ENCODE measurements at regions of chr3 and their contacts with region 1.

Region 1: DNA sequence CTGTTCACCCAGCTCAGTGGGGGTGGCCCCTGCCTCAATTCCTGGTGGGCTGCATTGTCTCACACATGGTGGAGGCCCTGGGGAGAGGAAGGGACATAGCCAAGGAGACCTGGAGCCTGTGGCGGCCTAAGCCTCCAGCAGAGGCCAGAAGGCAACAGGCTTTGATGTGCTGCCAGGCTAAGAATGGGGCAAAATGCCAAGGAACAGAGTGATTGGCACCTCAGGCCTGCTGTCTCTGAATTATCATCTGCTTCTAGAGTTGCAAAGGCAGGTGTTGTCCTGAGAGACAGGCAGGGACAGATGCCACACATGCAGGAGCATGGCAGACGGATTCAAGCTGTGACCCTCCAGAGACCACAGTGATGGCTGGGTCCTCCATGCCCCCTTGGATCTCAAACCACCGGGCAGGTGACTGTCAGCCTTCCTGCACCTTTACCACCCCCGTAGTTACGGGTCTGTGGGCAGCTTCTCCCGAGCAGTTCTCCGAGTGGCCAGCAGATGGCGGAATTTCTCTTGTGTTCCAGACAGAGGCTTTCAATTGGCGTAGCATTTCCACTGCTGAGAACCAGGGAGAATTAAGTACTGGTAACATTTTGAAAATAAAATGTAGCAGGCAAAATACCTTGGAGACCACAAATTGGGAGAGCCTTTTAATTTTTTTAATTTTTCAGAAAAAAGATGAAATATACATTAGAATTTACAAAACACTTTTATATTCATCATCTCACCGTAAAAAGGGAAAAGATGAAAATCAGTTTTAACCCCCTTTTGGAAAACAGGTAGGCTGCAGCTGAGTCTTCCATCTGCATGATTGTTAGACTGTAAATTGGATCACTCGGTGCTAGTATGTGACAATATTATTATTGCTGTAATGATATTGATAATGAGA is 525.5 kb upstream of the CFAP20DC start:
- DNase-seq: peak; percentile 76
- ATAC-seq: peak; percentile 61
- H3K4me3 Mint-ChIP-seq: no peak overlapping the region
- H3K27ac Mint-ChIP-seq: no peak overlapping the region
- H3K4me1 Mint-ChIP-seq: no peaks in the 10 kb centered on the region
- H3K27me3 Mint-ChIP-seq: no peaks in the 10 kb centered on the region
- CTCF ChIP-seq: peak; percentile 40

Region 2: DNA sequence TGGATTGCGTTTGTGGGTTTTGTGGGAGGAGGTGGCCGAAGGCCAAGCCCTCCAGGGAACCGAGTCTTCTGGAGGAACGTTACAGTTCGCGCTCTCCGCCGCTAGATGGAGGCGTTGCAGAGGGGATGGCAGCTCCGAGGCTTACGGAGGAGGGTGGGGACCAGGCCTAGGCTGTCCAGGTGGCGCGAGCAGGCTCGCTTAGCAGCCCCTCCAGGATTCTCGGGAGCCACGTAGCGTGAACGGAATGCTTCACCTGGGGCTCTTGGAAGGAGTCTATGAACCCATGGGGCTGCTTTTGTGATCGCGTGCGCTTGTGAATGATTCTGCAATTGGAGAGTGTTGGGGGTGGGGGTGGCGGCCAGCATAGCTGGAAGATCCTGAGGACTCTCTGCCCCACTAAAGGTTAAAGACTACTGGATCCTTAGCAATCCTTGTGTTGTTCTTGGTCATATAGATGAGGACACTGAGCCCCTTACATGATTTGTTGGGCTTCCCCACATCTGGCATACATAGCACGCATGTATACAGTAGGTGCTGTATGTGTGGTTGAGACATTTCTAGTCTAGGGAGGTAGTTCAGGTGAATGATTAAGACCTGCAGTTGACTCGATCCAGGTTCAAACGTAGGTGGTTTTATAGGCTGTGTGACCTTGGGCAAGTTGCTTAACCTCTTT is 934.5 kb before region 1 on chr3:
- CTCF ChIA-PET with region 1: no interaction called
- POLR2A ChIA-PET with region 1: no interaction called
- intact Hi-C with region 1: loop called (anchors 2 kb)
- DNase-seq: peak; percentile 50
- ATAC-seq: peak; percentile 96
- H3K4me3 Mint-ChIP-seq: no peak overlapping the region
- H3K27ac Mint-ChIP-seq: no peak overlapping the region
- H3K4me1 Mint-ChIP-seq: peaks cover 7% of the 10 kb centered on the region
- H3K27me3 Mint-ChIP-seq: peaks cover 2% of the 10 kb centered on the region
- CTCF ChIP-seq: peak; percentile 37

Region 3: DNA sequence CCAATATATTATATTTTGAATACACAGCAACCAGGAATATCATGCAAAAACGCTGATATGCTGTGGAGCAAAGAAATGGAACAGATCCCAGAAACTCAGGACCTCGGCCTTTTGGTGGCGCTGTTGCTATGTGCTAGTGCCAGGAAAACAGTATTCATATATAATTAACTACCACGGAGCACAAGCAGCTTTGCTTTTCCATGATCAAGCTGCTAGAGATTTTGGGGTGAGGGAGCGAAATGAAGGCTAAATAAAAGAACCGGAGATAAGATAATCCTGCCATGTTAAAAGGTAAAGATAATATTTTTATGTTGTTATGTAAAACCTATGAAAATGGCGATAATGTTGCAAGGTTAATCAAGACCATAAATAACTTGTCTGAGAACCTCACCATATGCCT is 751.1 kb before region 1 on chr3:
- CTCF ChIA-PET with region 1: no interaction called
- POLR2A ChIA-PET with region 1: no interaction called
- intact Hi-C with region 1: loop called (anchors 10 kb)
- DNase-seq: no peak
- ATAC-seq: no peak
- H3K4me3 Mint-ChIP-seq: no peak overlapping the region
- H3K27ac Mint-ChIP-seq: no peak overlapping the region
- H3K4me1 Mint-ChIP-seq: peaks cover 5% of the 10 kb centered on the region
- H3K27me3 Mint-ChIP-seq: no peaks in the 10 kb centered on the region
- CTCF ChIP-seq: no peak

Region 4: GRCh38 chr3:59212128-59212779 is 363.1 kb before region 1 on chr3:
- CTCF ChIA-PET with region 1: interaction called, 3 read pairs
- POLR2A ChIA-PET with region 1: no interaction called
- intact Hi-C with region 1: loop called (anchors 1 kb)
- DNase-seq: no peak
- ATAC-seq: peak; percentile 37
- H3K4me3 Mint-ChIP-seq: no peak overlapping the region
- H3K27ac Mint-ChIP-seq: no peak overlapping the region
- H3K4me1 Mint-ChIP-seq: no peaks in the 10 kb centered on the region
- H3K27me3 Mint-ChIP-seq: peaks cover 3% of the 10 kb centered on the region
- CTCF ChIP-seq: no peak

Region 5: DNA sequence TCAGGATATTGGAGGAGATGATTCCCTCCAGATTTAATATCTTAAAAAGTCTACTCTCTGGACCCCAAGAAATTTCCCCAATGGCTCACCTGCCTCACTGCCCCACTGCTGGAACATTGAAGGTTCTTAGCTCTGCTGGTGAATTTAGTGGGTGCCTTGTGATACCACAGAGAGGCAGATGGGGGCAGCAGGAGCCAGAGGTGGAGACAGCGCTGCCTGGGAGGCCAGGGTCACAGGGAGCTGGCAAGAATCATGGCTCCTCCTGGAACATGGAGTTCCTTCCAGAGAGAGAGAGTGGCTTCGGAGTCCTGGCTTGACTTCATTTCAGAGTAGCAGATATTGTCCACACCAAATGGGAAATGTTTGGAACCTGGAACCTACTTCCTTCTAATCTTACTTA is 262.0 kb before region 1 on chr3:
- CTCF ChIA-PET with region 1: interaction called, 4 read pairs
- POLR2A ChIA-PET with region 1: no interaction called
- intact Hi-C with region 1: loop called (anchors 1 kb)
- DNase-seq: no peak
- ATAC-seq: peak; percentile 40
- H3K4me3 Mint-ChIP-seq: no peak overlapping the region
- H3K27ac Mint-ChIP-seq: no peak overlapping the region
- H3K4me1 Mint-ChIP-seq: no peaks in the 10 kb centered on the region
- H3K27me3 Mint-ChIP-seq: no peaks in the 10 kb centered on the region
- CTCF ChIP-seq: no peak

Region 6: GRCh38 chr3:59809710-59810444 is 234.5 kb after region 1 on chr3:
- CTCF ChIA-PET with region 1: interaction called, 22 read pairs
- POLR2A ChIA-PET with region 1: no interaction called
- intact Hi-C with region 1: loop called (anchors 1 kb)
- DNase-seq: no peak
- ATAC-seq: no peak
- H3K4me3 Mint-ChIP-seq: no peak overlapping the region
- H3K27ac Mint-ChIP-seq: peak overlapping the region; percentile 10
- H3K4me1 Mint-ChIP-seq: peaks cover 25% of the 10 kb centered on the region
- H3K27me3 Mint-ChIP-seq: no peaks in the 10 kb centered on the region
- CTCF ChIP-seq: no peak

Region 7: GRCh38 chr3:61381745-61382392 is 1806.5 kb after region 1 on chr3:
- CTCF ChIA-PET with region 1: interaction called, 12 read pairs
- POLR2A ChIA-PET with region 1: no interaction called
- intact Hi-C with region 1: loop called (anchors 1 kb)
- DNase-seq: no peak
- ATAC-seq: peak; percentile 49
- H3K4me3 Mint-ChIP-seq: no peak overlapping the region
- H3K27ac Mint-ChIP-seq: no peak overlapping the region
- H3K4me1 Mint-ChIP-seq: no peaks in the 10 kb centered on the region
- H3K27me3 Mint-ChIP-seq: peaks cover 8% of the 10 kb centered on the region
- CTCF ChIP-seq: no peak

Measured in activated B cell treated with CpG ODN at 0.5 μM for 24 hours (primary cell).